IMR-90 (cell line): ENCODE measurements at regions of chr14 and their contacts with region 1.

Region 1: GRCh38 chr14:52131640-52132320 is 62.9 kb upstream of the NID2 start:
- DNase-seq: peak; percentile 96
- ATAC-seq: peak; percentile 94
- H3K4me3 ChIP-seq: no peak overlapping the region
- H3K27ac ChIP-seq: no peak overlapping the region
- H3K4me1 ChIP-seq: peaks cover 2% of the 10 kb centered on the region; the same call in 1 of the 2 replicates
- H3K27me3 ChIP-seq: no peaks in the 10 kb centered on the region
- CTCF ChIP-seq: peak; percentile 95
- POLR2A ChIP-seq: no peak; the same call in 1 of the 2 replicates
- RAD21 ChIP-seq: peak; percentile 96

Region 2: DNA sequence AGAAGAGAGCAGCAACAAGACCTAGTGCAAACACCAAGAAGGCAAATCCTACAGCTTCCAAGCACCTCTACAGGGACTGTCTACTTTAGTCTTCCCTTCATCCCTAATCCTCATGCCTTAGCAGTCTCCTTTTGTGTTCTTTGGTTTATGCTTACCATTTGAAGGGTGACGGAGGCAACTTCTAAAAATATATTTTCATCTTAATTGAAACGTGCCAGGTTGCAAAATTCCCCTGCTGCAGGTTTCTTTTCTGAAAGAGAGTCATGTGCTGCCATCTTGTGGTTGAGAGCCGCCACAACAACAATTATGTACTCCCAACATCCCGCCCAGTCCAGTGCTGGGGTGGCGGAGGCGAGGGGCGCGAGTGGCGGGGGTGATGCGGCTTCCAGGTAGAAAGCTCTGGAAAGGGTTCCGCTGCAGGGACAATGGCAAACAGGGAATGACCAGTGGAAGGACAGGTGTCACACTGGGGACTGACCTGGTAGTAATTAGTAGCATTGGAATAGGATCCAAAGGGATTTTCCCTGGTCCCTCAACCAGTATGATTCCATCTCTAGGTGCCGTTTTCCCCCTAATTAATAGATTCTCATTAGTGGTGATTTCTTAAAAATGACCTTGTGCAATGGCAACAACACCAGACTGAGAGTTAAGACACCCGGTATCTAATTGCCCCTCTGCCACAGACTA is 351.6 kb before region 1 on chr14:
- CTCF ChIA-PET with region 1: no interaction called
- POLR2A ChIA-PET with region 1: no interaction called
- dilution Hi-C with region 1: no loop called
- in situ Hi-C with region 1: no loop called
- intact Hi-C with region 1: loop called (anchors 2 kb)
- DNase-seq: peak; percentile 59
- ATAC-seq: peak; percentile 73
- H3K4me3 ChIP-seq: no peak overlapping the region
- H3K27ac ChIP-seq: no peak overlapping the region
- H3K4me1 ChIP-seq: peaks cover 2% of the 10 kb centered on the region; the same call in 1 of the 2 replicates
- H3K27me3 ChIP-seq: no peaks in the 10 kb centered on the region
- CTCF ChIP-seq: peak; percentile 71
- POLR2A ChIP-seq: no peak
- RAD21 ChIP-seq: peak; percentile 84

Region 3: DNA sequence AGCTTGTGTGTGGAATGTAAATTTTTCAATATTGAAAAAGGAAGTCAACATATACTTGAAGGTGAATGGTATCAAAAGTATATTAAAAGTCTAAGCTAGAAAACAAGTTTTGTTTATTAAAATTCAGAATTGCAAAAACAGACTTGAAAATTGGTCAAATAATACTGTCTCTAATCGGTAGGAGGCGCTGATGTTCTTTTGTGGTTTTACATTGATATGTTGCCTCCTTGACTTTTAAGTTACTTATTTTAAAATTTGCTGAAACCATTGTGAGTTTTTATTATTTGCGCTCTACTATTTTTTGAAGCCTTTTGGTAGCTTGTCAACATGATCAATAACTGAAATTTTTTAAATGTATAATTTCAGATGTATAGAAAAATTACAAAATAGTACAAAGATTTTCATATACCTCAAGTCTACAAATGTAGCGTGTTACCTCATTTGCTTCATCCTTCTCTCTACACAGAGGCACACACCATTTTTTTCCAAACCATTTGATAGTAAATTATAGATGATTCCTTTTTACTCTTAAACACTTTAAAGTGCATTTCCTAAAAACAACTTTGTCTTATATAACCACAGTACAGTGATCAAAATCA is 135.5 kb before region 1 on chr14:
- CTCF ChIA-PET with region 1: interaction called, 3 read pairs
- POLR2A ChIA-PET with region 1: no interaction called
- dilution Hi-C with region 1: no loop called
- in situ Hi-C with region 1: loop called (anchors 5 kb)
- intact Hi-C with region 1: loop called (anchors 1 kb)
- DNase-seq: peak; percentile 68
- ATAC-seq: peak; percentile 33; the same call in 1 of the 2 replicates
- H3K4me3 ChIP-seq: no peak overlapping the region
- H3K27ac ChIP-seq: no peak overlapping the region
- H3K4me1 ChIP-seq: peaks cover 2% of the 10 kb centered on the region; the same call in 1 of the 2 replicates
- H3K27me3 ChIP-seq: no peaks in the 10 kb centered on the region
- CTCF ChIP-seq: peak; percentile 78
- POLR2A ChIP-seq: no peak
- RAD21 ChIP-seq: peak; percentile 85

Region 4: DNA sequence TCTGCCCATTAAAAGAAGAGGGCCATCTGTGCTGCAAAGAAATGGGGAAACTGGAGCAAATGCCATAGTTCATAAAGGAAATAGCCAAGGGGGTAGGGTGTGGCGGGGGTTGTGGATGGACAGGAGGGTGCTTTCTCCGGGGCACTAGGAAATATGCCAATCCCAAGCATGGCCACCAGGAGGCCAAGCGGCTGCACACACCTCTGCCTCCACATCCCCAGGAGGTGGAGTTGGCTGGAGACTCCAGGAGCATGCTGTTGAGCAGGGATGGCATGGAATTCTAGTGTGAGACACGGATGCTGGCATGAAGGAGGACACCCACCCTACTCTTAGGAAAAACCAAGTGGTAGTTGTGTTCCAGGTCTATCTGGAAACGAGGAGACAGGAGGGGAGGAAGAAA is 88.1 kb before region 1 on chr14:
- CTCF ChIA-PET with region 1: no interaction called
- POLR2A ChIA-PET with region 1: no interaction called
- dilution Hi-C with region 1: no loop called
- in situ Hi-C with region 1: no loop called
- intact Hi-C with region 1: loop called (anchors 1 kb)
- DNase-seq: peak; percentile 23
- ATAC-seq: 0 out of 2 replicates have a peak, but pooled peaks have one; percentile 21
- H3K4me3 ChIP-seq: no peak overlapping the region
- H3K27ac ChIP-seq: peak overlapping the region; percentile 10; the same call in 1 of the 2 replicates
- H3K4me1 ChIP-seq: peaks cover 35% of the 10 kb centered on the region
- H3K27me3 ChIP-seq: no peaks in the 10 kb centered on the region
- CTCF ChIP-seq: peak; percentile 51
- POLR2A ChIP-seq: no peak
- RAD21 ChIP-seq: peak; percentile 56

Region 5: GRCh38 chr14:52220924-52221811 is 89.4 kb after region 1 on chr14:
- CTCF ChIA-PET with region 1: no interaction called
- POLR2A ChIA-PET with region 1: no interaction called
- dilution Hi-C with region 1: no loop called
- in situ Hi-C with region 1: no loop called
- intact Hi-C with region 1: no loop called
- DNase-seq: no peak
- ATAC-seq: no peak
- H3K4me3 ChIP-seq: no peak overlapping the region
- H3K27ac ChIP-seq: no peak overlapping the region
- H3K4me1 ChIP-seq: peaks cover 3% of the 10 kb centered on the region; the same call in 1 of the 2 replicates
- H3K27me3 ChIP-seq: peaks cover 6% of the 10 kb centered on the region
- CTCF ChIP-seq: no peak
- POLR2A ChIP-seq: no peak
- RAD21 ChIP-seq: no peak

Region 6: DNA sequence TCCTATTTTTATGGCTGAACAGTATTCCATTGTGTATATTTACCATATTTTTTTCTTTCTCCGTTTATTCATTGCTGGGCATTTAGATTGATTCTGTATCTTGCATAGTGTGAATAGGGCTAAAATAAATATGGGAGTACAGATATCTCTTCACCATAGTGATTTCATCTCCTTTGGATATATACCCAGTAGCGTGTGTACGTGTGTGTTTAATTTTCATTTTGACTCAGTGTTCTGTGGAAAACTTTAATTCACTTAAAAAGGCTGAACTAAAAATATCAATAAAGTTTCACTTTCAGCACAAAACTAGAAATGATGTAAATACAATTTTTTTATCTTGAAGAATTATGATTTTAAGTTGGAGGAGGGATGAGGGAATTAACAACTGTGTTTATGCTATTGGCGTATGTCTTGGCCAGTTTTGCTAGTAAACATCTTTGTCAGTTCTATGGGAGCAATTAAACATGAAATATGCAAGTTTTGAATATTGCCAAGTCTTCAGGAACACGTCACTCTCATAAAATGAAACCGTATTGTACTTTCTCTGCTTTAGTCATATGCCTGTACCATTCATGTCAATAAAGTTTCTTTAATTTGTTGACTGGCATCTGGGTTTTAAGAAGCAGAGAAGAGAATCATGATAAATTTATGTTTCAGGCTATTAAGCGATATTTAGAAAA is 282.1 kb after region 1 on chr14:
- CTCF ChIA-PET with region 1: no interaction called
- POLR2A ChIA-PET with region 1: no interaction called
- dilution Hi-C with region 1: no loop called
- in situ Hi-C with region 1: no loop called
- intact Hi-C with region 1: no loop called
- DNase-seq: peak; percentile 65
- ATAC-seq: peak; percentile 72
- H3K4me3 ChIP-seq: peak overlapping the region; percentile 32; the same call in 1 of the 2 replicates
- H3K27ac ChIP-seq: no peak overlapping the region
- H3K4me1 ChIP-seq: peaks cover 5% of the 10 kb centered on the region
- H3K27me3 ChIP-seq: no peaks in the 10 kb centered on the region
- CTCF ChIP-seq: no peak
- POLR2A ChIP-seq: no peak
- RAD21 ChIP-seq: no peak